ENCODE measurements at regions of chr15 and their contacts with region 1.

Region 1: GRCh38 chr15:81265944-81266775 is 57.8 kb downstream of the STARD5 start:
- DNase-seq: peak; percentile 82
- H3K4me3 Mint-ChIP-seq: peak overlapping the region; percentile 37
- H3K27ac Mint-ChIP-seq: no peak overlapping the region
- H3K4me1 Mint-ChIP-seq: peaks cover 9% of the 10 kb centered on the region
- H3K27me3 Mint-ChIP-seq: no peaks in the 10 kb centered on the region
- CTCF ChIP-seq: peak; percentile 85

Region 2: GRCh38 chr15:80977627-80978036 is 288.5 kb before region 1 on chr15:
- CTCF ChIA-PET with region 1: interaction called, 19 read pairs
- POLR2A ChIA-PET with region 1: no interaction called
- intact Hi-C with region 1: loop called (anchors 5 kb)
- DNase-seq: peak; percentile 30
- H3K4me3 Mint-ChIP-seq: no peak overlapping the region
- H3K27ac Mint-ChIP-seq: no peak overlapping the region
- H3K4me1 Mint-ChIP-seq: peaks cover 6% of the 10 kb centered on the region
- H3K27me3 Mint-ChIP-seq: no peaks in the 10 kb centered on the region
- CTCF ChIP-seq: no peak

Region 3: DNA sequence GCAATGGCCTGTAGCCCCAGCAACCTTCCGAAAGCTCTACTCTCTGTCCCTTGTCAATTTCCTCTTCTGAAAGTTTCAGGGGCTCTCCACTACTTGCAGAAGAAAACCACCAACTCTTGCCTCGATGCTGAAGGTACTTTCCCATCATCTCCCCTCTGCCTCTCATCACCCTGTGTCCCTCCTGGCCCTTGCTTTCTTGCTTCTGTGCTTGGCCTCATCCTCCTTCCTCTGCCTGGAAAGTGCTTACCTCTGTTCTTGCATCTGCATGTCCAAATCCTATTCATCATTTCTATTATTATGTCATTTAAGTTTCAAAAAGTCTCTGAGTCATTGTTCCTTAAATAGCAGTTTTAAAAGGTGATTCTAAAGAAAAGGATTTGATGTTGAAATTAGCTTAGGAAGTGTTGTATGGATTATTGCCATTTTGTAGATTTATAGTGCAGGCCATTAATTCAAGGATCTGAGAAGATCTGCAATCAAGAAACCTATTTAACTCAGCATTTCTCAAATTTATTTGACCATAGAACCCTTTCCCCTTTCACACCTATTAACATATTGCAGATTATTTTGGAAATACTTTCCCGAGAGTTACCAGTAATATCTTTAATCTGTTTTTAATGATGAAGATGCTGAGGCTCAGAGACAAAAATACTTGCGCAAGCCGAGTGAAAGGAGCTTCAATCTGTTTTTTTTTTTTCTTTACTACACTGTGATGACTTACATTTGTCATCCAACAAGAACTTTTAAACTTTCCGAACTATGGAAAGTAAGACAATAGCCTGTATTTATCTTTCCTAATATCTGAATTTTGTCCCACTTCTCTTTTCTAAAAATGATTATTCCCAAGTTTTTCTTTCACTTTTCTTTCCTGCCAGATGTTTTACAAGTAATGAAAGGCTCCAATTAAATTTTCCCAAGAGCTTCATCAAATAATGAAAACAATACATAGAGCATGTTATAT is 154.4 kb before region 1 on chr15:
- CTCF ChIA-PET with region 1: interaction called, 459 read pairs
- POLR2A ChIA-PET with region 1: interaction called, 12 read pairs
- intact Hi-C with region 1: loop called (anchors 1 kb)
- DNase-seq: peak; percentile 60
- H3K4me3 Mint-ChIP-seq: peak overlapping the region; percentile 0
- H3K27ac Mint-ChIP-seq: no peak overlapping the region
- H3K4me1 Mint-ChIP-seq: peaks cover 28% of the 10 kb centered on the region
- H3K27me3 Mint-ChIP-seq: no peaks in the 10 kb centered on the region
- CTCF ChIP-seq: no peak

Region 4: GRCh38 chr15:81146006-81146405 is 120.2 kb before region 1 on chr15:
- CTCF ChIA-PET with region 1: interaction called, 24 read pairs
- POLR2A ChIA-PET with region 1: no interaction called
- intact Hi-C with region 1: no loop called
- DNase-seq: no peak
- H3K4me3 Mint-ChIP-seq: no peak overlapping the region
- H3K27ac Mint-ChIP-seq: no peak overlapping the region
- H3K4me1 Mint-ChIP-seq: no peaks in the 10 kb centered on the region
- H3K27me3 Mint-ChIP-seq: no peaks in the 10 kb centered on the region
- CTCF ChIP-seq: no peak

Region 5: GRCh38 chr15:81184188-81184587 is 82.0 kb before region 1 on chr15:
- CTCF ChIA-PET with region 1: no interaction called
- POLR2A ChIA-PET with region 1: no interaction called
- intact Hi-C with region 1: no loop called
- DNase-seq: no peak
- H3K4me3 Mint-ChIP-seq: no peak overlapping the region
- H3K27ac Mint-ChIP-seq: no peak overlapping the region
- H3K4me1 Mint-ChIP-seq: peaks cover 6% of the 10 kb centered on the region
- H3K27me3 Mint-ChIP-seq: no peaks in the 10 kb centered on the region
- CTCF ChIP-seq: no peak

Region 6: DNA sequence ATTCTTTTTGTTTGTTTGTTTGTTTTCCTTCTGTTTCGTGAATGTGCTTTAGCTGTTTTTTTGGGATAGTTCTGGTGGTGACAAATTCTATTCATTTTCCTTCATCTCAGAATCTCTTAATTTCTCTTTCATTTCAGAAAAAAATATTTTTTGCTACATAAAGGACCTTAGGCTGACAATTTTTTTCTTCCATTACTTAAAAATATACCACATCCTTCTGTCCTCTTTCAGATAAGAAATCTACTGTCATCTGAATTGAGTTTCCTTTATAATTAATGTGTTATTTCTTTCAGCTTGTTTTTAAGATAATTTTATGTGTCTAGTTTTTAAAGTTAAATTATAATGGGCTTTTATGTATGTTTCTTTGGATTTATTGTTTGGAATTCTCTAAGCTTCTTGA is 21.9 kb before region 1 on chr15:
- CTCF ChIA-PET with region 1: interaction called, 14 read pairs
- POLR2A ChIA-PET with region 1: interaction called, 3 read pairs
- intact Hi-C with region 1: no loop called
- DNase-seq: no peak
- H3K4me3 Mint-ChIP-seq: no peak overlapping the region
- H3K27ac Mint-ChIP-seq: no peak overlapping the region
- H3K4me1 Mint-ChIP-seq: no peaks in the 10 kb centered on the region
- H3K27me3 Mint-ChIP-seq: no peaks in the 10 kb centered on the region
- CTCF ChIP-seq: no peak

Region 7: DNA sequence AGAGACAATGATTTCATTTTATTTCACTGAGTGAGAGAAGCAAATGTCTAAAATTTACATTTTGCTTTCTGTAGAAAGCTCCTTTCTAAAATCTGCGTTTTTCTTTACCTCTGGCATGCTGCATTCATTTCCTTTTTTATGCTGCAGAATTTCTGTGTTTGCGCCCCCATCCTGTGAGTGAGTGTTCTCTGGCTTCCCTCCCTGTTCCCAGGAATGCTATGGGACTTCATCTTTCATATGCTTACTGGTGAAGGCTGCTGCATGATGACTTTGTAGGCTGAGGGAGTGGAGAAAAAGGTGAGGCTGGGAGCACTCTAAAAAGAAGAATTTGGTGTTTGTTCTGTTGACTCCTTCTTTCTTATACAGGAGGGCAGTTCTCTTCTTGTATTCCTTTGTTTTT is 115.6 kb after region 1 on chr15:
- CTCF ChIA-PET with region 1: interaction called, 11 read pairs
- POLR2A ChIA-PET with region 1: no interaction called
- intact Hi-C with region 1: no loop called
- DNase-seq: no peak
- H3K4me3 Mint-ChIP-seq: no peak overlapping the region
- H3K27ac Mint-ChIP-seq: no peak overlapping the region
- H3K4me1 Mint-ChIP-seq: no peaks in the 10 kb centered on the region
- H3K27me3 Mint-ChIP-seq: peaks cover 28% of the 10 kb centered on the region
- CTCF ChIP-seq: no peak

Region 8: GRCh38 chr15:81410318-81410753 is 144.2 kb after region 1 on chr15:
- CTCF ChIA-PET with region 1: interaction called, 12 read pairs
- POLR2A ChIA-PET with region 1: no interaction called
- intact Hi-C with region 1: no loop called
- DNase-seq: peak; percentile 82
- H3K4me3 Mint-ChIP-seq: no peak overlapping the region
- H3K27ac Mint-ChIP-seq: peak overlapping the region; percentile 31
- H3K4me1 Mint-ChIP-seq: peaks cover 13% of the 10 kb centered on the region
- H3K27me3 Mint-ChIP-seq: peaks cover 12% of the 10 kb centered on the region
- CTCF ChIP-seq: peak; percentile 48